Left colon (tissue), 2 donors: ENCODE measurements at regions of chr14 and their contacts with region 1.

Region 1: DNA sequence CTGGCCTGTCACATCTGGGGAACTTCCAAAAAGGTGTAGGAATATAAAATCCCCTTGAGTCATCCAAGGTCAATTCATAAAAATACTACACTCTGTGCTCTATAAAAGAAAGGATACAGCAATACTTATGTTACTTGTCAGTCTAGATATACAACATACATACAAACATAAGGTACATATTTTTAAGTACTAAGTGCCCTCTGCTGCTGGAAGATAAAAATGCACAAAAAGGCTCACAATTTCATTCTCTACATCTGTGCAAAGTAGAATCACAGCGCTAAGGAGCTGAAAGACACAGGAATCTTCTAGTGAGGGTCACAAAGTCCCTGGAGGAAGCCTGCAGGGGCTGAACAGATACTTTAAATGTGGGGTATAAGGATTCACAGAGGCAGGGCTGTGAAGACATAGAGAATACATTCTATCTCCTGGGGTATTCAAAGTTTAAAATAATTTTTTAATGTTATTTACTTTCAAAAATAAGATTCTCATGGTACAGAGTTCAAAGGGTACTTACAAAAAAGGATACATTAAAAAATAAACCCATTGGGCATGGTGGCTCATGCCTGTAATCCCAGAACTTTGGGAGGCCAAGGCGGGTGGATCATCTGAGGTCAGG is 10.2 kb upstream of the GOLGA5 start:
- DNase-seq: no peak
- ATAC-seq: peak; percentile 86

Region 2: DNA sequence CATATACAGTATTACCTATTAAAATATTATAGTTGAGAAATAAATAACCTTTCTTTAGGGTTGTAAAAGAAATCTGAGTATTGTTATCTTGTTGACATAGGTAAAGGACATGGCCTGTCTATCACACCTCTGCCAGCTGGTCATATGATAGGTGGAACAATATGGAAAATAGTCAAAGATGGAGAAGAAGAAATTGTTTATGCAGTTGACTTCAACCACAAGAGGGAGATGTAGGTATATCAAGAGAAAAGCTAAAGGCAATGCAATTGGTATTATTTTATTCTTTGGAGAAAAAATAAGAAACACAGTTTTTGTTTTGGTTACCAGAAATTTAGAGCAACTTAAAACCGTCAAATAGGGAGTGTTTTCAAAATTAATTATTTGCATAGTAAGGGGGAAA is 648.7 kb before region 1 on chr14:
- intact Hi-C with region 1: loop called in 1 of 2 experiments (anchors 10 kb)
- DNase-seq: no peak
- ATAC-seq: peak; percentile 75

Region 3: GRCh38 chr14:92719890-92720323 is 64.0 kb before region 1 on chr14:
- intact Hi-C with region 1: loop called (anchors 5 to 10 kb)
- DNase-seq: peak; percentile 73 to 87
- ATAC-seq: peak; percentile 89

Region 4: DNA sequence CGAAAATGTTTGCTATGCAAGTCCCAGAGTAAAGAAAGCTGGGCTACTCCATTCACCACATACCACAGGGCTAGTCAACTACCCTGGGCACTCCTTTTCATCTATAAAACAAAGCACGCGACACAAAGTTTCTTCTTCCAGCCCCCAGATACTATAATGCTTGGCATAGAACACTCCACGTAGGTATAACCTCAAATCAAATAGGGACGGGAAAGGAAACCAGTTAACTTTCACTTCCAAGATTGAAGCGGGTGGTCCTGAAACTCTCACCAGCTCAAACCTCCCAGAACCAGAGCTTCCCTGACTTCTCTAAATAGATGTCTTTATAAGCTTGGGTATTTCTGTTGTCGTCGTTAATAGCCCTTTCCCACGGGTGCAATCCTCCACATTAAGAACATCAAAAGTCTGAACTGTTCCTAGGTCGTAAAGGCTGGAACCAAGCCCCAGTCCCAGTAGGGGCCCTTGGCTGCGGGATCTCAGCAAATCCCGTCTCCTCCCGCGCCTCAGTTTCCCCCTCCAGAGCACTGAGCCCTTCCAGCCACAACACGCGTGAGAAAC is 36.1 kb before region 1 on chr14:
- intact Hi-C with region 1: loop called in 1 of 2 experiments (anchors 1 kb)
- DNase-seq: no peak
- ATAC-seq: peak; percentile 46

Region 5: GRCh38 chr14:92848887-92849286 is 65.0 kb after region 1 on chr14:
- intact Hi-C with region 1: no loop called
- DNase-seq: no peak
- ATAC-seq: no peak